ENCODE measurements at regions of chr20 and their contacts with region 1.

Region 1: GRCh38 chr20:49183444-49183843 is 4.7 kb downstream of the STAU1 start:
- DNase-seq: no peak
- H3K27ac ChIP-seq: no peak overlapping the region
- CTCF ChIP-seq: no peak

Region 2: DNA sequence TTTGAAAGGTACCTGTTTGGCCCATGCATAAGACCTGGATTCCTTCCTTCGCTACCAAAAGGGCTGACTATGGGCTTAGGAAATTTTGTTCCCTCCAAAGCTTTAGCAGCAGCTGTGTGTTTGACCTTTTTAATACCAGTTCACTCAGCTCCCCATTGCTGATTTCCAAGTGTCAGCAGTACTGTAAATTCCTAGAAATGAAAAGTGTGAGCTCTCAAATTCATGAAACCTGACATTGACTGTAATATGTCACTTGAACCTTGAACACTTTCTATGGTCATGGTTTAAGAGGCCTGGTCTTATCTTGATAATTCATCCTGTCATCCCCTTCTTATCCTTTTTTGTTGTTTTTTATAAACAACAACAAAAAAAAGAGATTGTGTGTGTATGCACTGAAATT is 27.0 kb before region 1 on chr20:
- CTCF ChIA-PET with region 1: interaction called, 10 read pairs
- POLR2A ChIA-PET with region 1: no interaction called
- DNase-seq: no peak
- H3K27ac ChIP-seq: no peak overlapping the region
- CTCF ChIP-seq: no peak

Region 3: GRCh38 chr20:49433333-49433732 is 249.9 kb after region 1 on chr20:
- CTCF ChIA-PET with region 1: no interaction called
- POLR2A ChIA-PET with region 1: no interaction called
- DNase-seq: no peak
- H3K27ac ChIP-seq: no peak overlapping the region
- CTCF ChIP-seq: no peak

Measured in RWPE1 (cell line).